T-cell (primary cell): ENCODE measurements at regions of chr1 and their contacts with region 1.

Region 1: DNA sequence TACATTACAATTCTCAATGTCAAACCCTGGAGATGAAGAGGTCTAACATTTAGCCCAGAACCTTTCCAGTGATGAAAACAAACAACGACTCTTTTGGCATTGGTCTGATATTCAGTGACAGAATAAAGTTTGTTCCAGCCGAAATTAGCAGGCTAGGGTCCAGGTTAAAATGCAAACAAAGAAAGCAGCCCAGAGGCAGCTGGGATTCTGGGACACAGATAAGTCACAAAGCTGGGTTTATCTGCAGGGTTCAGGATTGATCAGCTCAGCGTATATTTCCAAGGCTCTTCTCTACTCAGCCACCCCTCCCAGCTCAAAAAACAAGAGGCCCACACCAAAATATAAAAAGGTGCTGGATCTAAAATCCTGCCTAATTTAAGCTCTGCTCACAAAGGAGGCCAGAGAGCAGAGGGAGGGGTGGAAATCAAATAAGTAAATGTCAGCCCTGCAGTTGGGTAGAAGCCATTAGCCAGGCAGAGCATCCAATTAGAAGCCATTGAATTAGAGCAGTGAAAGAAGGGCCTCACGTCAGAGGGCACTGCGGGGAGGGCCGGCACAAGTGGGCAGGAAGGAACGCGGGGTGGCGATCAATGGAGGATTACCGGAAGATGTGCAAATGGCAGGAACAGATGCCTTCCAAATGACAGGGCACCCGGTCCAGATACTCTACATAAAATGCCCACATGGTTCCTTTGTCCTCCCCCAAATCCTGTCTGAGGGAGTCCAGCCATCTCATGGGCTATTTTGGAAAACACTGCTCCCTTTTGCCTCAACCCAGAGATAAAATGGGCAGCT is 3.2 kb upstream of the KLHDC8A start:
- DNase-seq: no peak
- ATAC-seq: no peak
- H3K4me3 ChIP-seq: no peak overlapping the region
- H3K4me3 Mint-ChIP-seq: no peak overlapping the region
- H3K27ac ChIP-seq: no peak overlapping the region
- H3K27ac Mint-ChIP-seq: no peak overlapping the region
- H3K4me1 ChIP-seq: no peaks in the 10 kb centered on the region
- H3K4me1 Mint-ChIP-seq: no peaks in the 10 kb centered on the region
- H3K27me3 ChIP-seq: peaks cover 3 to 21% of the 10 kb centered on the region in 2 experiments
- H3K27me3 Mint-ChIP-seq: peaks cover 8 to 27% of the 10 kb centered on the region in 2 donors

Region 2: DNA sequence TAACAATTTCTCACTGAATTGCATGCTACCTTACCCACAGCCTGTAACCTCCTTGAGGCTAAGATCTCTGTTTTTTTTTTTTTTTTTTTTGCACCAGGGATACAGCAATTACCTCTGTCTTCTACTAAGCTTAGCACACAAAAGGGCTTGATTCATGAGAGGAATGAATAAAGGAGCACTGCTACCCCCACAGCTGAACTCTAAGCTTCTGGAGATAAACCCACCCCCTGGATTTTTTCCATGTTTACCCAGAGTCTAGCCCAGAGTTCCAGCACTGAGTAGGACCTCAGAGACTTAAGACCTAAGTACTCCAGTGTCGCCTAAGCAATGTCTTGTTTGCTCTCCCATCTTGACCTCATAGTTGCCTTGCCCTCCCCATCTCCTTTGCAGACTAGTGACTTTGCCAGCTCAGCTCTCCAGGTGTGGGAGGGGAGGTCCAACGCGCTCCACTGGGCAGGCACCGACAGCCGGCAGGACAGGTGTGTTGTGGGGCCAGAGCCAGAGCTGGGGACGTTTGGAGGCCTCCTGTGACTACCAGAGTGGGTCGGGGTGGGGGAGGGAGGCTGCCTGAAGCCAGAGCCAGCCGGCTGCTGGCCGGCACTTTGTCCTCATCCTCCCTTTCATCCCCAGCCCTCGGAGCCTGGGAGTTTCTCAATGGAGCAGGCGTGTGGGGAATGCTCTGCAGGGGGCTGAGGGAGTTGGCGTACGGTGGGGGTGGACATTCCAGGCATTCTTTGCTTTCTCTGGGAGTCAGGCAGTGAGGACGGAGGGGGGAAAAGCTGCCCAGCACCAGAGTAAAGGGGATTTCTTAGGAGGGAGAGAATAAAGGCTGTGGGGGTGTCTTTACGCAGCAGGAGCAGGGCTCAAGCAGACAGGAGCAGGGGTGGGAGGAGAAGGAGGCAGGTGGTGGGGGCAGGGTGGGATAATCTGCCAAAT is 58.8 kb before region 1 on chr1:
- CTCF ChIA-PET with region 1: no interaction called
- POLR2A ChIA-PET with region 1: interaction called in 1 of 2 experiments, 10 read pairs
- DNase-seq: no peak
- ATAC-seq: no peak
- H3K4me3 ChIP-seq: no peak overlapping the region
- H3K4me3 Mint-ChIP-seq: no peak overlapping the region
- H3K27ac ChIP-seq: no peak overlapping the region
- H3K27ac Mint-ChIP-seq: peak overlapping the region; percentile 64 to 75
- H3K4me1 ChIP-seq: peaks cover 0 to 41% of the 10 kb centered on the region in 2 experiments
- H3K4me1 Mint-ChIP-seq: peaks cover 55 to 69% (median 63%) of the 10 kb centered on the region in 3 donors
- H3K27me3 ChIP-seq: no peaks in the 10 kb centered on the region
- H3K27me3 Mint-ChIP-seq: no peaks in the 10 kb centered on the region